Activated CD4-positive, alpha-beta memory T cell treated with anti-CD3 and anti-CD28 coated beads for 36 hours (primary cell): ENCODE measurements at regions of chr9 and their contacts with region 1.

Region 1: DNA sequence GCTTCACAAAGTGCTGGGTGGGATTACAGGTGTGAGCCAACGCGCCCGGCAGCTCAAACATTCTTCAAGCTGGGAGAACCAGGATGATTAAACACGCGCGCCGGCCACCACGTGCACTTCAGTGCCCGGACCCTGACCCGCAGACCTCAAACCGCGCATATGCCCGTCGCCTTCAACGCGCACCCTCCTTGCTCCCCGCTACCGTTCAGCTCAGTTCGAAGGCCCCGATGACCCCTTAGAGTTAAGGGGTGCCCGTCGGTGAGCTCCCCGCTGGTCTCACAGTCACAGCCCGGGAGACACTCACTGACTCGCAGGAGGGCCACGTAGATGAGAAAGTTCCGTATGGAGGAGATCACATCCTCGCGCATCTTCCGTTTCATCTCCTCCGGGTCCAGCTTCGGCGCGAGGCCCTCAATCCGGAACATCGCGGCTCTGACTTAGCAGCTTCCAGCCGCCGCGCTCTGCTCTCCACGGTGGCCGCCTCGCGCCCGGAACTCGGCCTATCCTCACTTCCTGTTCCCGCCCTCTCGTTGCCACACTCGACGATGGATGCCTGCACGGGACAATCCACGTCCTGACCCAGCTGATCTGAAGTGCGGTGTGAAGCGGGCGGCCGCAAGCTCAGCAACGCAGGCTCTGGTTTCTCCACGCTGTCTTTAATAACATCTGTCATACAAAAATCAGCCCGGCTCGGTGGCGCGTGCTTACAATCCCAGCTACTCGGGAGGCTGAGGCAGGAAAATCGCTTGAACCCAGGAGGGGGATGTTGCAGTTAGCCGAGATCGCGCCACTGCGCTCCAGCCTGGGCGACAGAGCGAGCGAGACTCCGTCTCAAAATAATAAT is at the start of gene TOMM5:
- DNase-seq: peak; percentile 96
- H3K4me3 Mint-ChIP-seq: peak within 1 kb of the TSS; percentile 100
- H3K27ac Mint-ChIP-seq: peak within 1 kb of the TSS; percentile 98
- H3K4me1 Mint-ChIP-seq: peaks cover 32% of the 10 kb centered on the region
- H3K27me3 Mint-ChIP-seq: peaks cover 10% of the 10 kb centered on the region
- total RNA-seq, gene TOMM5: 146 to 147 TPM

Region 2: GRCh38 chr9:37126214-37126788 is 466.0 kb before region 1 on chr9:
- CTCF ChIA-PET with region 1: no interaction called
- POLR2A ChIA-PET with region 1: no interaction called
- intact Hi-C with region 1: no loop called
- DNase-seq: no peak
- H3K4me3 Mint-ChIP-seq: no peak overlapping the region
- H3K27ac Mint-ChIP-seq: no peak overlapping the region
- H3K4me1 Mint-ChIP-seq: peaks cover 29% of the 10 kb centered on the region
- H3K27me3 Mint-ChIP-seq: no peaks in the 10 kb centered on the region

Region 3: GRCh38 chr9:37465249-37466036 is 126.9 kb before region 1 on chr9 and contains the start of gene ZBTB5:
- CTCF ChIA-PET with region 1: no interaction called
- POLR2A ChIA-PET with region 1: interaction called, 9 read pairs
- intact Hi-C with region 1: loop called (anchors 5 kb)
- DNase-seq: peak; percentile 99
- H3K4me3 Mint-ChIP-seq: peak within 1 kb of the TSS; percentile 97
- H3K27ac Mint-ChIP-seq: peak within 1 kb of the TSS; percentile 95
- H3K4me1 Mint-ChIP-seq: peaks cover 29% of the 10 kb centered on the region
- H3K27me3 Mint-ChIP-seq: no peaks in the 10 kb centered on the region
- total RNA-seq, gene ZBTB5: 8.3 to 9.3 TPM

Region 4: GRCh38 chr9:37485389-37486219 is 106.7 kb before region 1 on chr9 and contains the start of gene POLR1E:
- CTCF ChIA-PET with region 1: interaction called, 12 read pairs
- POLR2A ChIA-PET with region 1: interaction called, 24 read pairs
- intact Hi-C with region 1: loop called (anchors 1 kb)
- DNase-seq: peak; percentile 97
- H3K4me3 Mint-ChIP-seq: peak within 1 kb of the TSS; percentile 88
- H3K27ac Mint-ChIP-seq: peak within 1 kb of the TSS; percentile 91
- H3K4me1 Mint-ChIP-seq: peaks cover 35% of the 10 kb centered on the region
- H3K27me3 Mint-ChIP-seq: peaks cover 6% of the 10 kb centered on the region
- total RNA-seq, gene POLR1E: 56.7 to 58.0 TPM

Region 5: DNA sequence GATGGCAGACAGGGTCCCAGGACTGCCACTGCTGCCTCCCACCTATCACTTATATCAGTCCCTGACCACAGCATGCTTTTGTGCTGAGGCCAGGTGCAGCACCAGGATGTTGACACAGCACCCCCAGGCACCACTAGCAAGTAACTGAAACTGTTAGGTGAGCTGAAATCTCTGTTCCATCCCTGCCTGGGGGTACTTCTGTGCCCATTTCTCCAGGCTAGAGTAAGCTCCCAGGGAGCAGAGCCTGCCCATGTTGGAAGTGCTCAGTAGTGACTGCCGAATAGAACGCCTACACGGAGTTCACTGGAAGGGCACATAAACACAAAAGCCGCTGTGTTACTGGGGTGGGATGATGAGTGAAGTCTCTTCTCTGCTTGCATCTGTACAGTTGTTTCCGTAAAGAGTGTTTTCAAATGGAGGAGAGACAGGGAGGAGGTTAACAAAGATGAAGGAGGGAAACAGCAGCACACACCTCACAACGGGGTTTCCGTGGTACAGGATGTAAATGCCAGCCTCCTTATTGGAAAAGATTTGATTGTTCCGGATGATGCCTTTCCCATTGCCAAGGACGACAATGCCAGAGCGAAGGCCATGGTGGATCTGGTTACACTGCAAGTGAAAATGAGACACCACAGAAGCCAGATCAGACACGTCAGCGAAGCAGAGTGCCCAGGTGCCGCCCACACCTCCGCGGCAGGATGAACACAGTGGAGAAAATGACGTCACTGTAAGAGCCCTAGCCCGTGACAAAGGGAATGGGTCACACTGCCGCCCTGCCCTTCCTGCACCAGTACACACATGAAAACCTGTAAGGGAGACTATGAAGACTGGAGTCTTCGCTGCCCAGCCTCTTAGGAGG is 63.4 kb before region 1 on chr9:
- CTCF ChIA-PET with region 1: no interaction called
- POLR2A ChIA-PET with region 1: interaction called, 4 read pairs
- intact Hi-C with region 1: loop called (anchors 1 kb)
- DNase-seq: peak; percentile 93
- H3K4me3 Mint-ChIP-seq: peak overlapping the region; percentile 71
- H3K27ac Mint-ChIP-seq: peak overlapping the region; percentile 94
- H3K4me1 Mint-ChIP-seq: peaks cover 42% of the 10 kb centered on the region
- H3K27me3 Mint-ChIP-seq: no peaks in the 10 kb centered on the region

Region 6: DNA sequence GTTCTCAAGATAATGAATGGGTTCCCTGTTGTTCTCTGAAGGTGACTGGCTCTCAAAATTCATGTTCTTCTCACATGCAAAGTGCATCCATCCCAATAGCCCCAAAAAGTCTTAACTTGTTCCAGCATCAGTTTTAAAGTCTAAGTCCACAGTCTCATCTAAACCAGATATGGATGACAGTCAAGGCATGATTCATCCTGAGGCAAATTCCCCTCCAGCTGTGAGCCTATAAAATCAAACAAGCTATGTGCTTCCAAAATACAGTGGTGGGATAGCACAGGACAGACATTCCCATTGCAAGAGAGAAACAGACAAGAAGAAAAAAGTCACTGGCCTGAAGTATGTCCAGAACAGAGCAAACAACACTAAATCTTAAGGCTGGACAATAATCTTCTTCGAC is 41.5 kb before region 1 on chr9:
- CTCF ChIA-PET with region 1: no interaction called
- POLR2A ChIA-PET with region 1: no interaction called
- intact Hi-C with region 1: no loop called
- DNase-seq: no peak
- H3K4me3 Mint-ChIP-seq: no peak overlapping the region
- H3K27ac Mint-ChIP-seq: no peak overlapping the region
- H3K4me1 Mint-ChIP-seq: peaks cover 5% of the 10 kb centered on the region
- H3K27me3 Mint-ChIP-seq: no peaks in the 10 kb centered on the region

Region 7: DNA sequence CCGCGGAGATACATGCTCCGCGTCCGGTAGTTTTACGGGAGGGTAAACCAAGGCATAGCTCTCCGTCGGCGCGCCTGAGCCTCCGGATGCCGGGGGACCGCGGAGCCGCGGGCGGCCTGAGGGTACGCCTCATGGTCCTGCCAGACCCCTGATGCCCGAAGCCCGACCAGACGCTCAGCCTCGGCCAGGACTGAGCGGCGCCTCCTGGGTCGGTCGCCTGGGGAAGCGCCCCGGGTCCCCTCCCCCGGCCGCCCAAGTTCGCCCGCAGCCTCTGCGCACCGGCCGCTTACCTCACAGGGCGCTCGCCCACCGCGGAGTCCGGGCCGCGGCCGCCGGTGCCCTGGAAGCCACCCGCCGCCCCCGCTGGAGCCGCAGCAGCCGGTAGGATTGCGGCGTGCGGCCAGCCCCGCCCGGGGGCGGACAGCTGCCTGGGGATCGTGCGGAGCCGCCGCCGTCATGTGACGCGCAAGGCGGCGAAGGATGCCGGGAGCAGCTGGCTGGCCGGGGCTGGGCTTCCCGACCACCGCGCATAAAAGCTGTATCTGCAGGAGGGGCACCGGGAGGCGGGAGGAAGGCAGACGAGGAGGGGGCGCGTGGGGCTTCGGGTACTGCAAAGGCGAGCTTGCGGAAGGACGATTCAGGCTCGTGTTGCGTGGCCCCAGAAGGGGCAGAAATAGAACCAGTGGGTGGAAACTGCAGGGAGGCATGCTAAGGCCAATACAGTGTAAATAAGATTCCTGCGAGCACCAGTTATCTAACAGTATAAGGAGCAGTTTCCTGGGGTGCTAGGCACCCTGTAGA is 16.2 kb before region 1 on chr9 and contains the start of gene FBXO10:
- CTCF ChIA-PET with region 1: interaction called, 9 read pairs
- POLR2A ChIA-PET with region 1: interaction called, 33 read pairs
- intact Hi-C with region 1: loop called (anchors 2 kb)
- DNase-seq: peak; percentile 64
- H3K4me3 Mint-ChIP-seq: peak within 1 kb of the TSS; percentile 79
- H3K27ac Mint-ChIP-seq: no peak within 1 kb of the TSS
- H3K4me1 Mint-ChIP-seq: peaks cover 16% of the 10 kb centered on the region
- H3K27me3 Mint-ChIP-seq: no peaks in the 10 kb centered on the region
- total RNA-seq, gene FBXO10: 3.6 to 3.9 TPM

Region 8: GRCh38 chr9:37676411-37676830 is 84.1 kb after region 1 on chr9:
- CTCF ChIA-PET with region 1: no interaction called
- POLR2A ChIA-PET with region 1: no interaction called
- intact Hi-C with region 1: no loop called
- DNase-seq: no peak
- H3K4me3 Mint-ChIP-seq: no peak overlapping the region
- H3K27ac Mint-ChIP-seq: no peak overlapping the region
- H3K4me1 Mint-ChIP-seq: no peaks in the 10 kb centered on the region
- H3K27me3 Mint-ChIP-seq: no peaks in the 10 kb centered on the region

Region 9: GRCh38 chr9:37753489-37754190 is 161.3 kb after region 1 on chr9 and contains the start of gene TRMT10B:
- CTCF ChIA-PET with region 1: no interaction called
- POLR2A ChIA-PET with region 1: interaction called, 3 read pairs
- intact Hi-C with region 1: loop called (anchors 10 kb)
- DNase-seq: peak; percentile 83
- H3K4me3 Mint-ChIP-seq: peak within 1 kb of the TSS; percentile 96
- H3K27ac Mint-ChIP-seq: peak within 1 kb of the TSS; percentile 88
- H3K4me1 Mint-ChIP-seq: peaks cover 23% of the 10 kb centered on the region
- H3K27me3 Mint-ChIP-seq: no peaks in the 10 kb centered on the region
- total RNA-seq, gene TRMT10B: 8.7 to 11.5 TPM

Region 10: GRCh38 chr9:37800631-37801286 is 208.4 kb after region 1 on chr9 and contains the start of gene DCAF10:
- CTCF ChIA-PET with region 1: no interaction called
- POLR2A ChIA-PET with region 1: no interaction called
- intact Hi-C with region 1: loop called (anchors 5 kb)
- DNase-seq: peak; percentile 92
- H3K4me3 Mint-ChIP-seq: peak within 1 kb of the TSS; percentile 93
- H3K27ac Mint-ChIP-seq: peak within 1 kb of the TSS; percentile 85
- H3K4me1 Mint-ChIP-seq: peaks cover 40% of the 10 kb centered on the region
- H3K27me3 Mint-ChIP-seq: no peaks in the 10 kb centered on the region
- total RNA-seq, gene DCAF10: 13.8 to 17.2 TPM